Aorta (tissue), 5 donors: ENCODE measurements at regions of chr9 and their contacts with region 1.

Region 1: GRCh38 chr9:109705515-109705914 is 74.5 kb upstream of the PALM2AKAP2 start:
- DNase-seq: no peak
- ATAC-seq: no peak
- H3K4me3 ChIP-seq: no peak overlapping the region
- H3K27ac ChIP-seq: no peak overlapping the region
- H3K4me1 ChIP-seq: peaks cover 3 to 4% of the 10 kb centered on the region in 2 donors
- H3K27me3 ChIP-seq: no peaks in the 10 kb centered on the region

Region 2: DNA sequence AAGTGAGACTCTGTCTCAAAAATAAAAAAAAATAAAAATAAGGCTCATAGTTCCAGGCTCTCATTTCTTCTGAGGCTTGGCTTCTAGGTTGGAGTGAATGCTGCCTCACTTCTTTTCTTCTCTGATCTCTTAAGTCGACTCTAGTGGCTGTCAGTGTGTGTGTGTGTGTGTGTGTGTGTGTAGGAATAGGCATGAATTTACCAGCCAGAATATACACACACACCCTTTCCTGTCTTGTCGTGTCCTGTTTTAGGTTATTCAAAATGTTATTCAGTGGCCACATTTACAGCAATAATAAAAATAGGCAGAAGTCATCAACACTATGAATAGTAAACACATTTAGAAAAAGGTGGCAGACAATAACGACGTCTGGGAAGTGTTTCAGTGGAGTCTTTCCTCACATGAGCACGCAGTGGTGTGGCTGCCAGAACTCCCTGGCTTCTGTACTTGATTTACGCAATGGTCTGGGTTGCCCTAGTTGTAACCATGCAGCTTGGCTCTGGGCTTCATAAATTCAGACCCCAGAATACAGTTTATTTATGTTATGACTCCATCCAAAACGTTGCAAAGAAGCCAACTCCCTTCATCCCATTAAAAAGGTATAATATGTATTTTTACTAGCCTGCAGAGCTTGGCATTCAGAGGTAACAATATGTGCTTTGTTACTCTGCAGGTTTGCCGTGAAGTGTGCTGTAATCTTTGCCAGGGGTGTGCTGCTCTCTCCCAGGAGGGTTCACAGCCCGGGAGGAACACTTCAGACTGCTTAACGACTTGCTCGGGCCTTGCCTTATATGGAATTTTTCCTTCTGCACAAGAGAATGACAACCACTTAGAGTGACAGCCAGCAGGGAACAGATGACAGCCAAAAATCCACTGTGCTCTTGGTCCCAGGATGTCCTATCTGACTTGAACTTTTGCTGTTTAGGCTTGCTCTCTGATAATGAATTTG is 40.1 kb after region 1 on chr9:
- intact Hi-C with region 1: loop called in 1 of 2 experiments (anchors 5 kb)
- DNase-seq: peak; percentile 76 to 88
- ATAC-seq: peak; percentile 91
- H3K4me3 ChIP-seq: peak overlapping the region in 1 of 2 donors; percentile 10
- H3K27ac ChIP-seq: peak overlapping the region; percentile 43 to 60
- H3K4me1 ChIP-seq: peaks cover 12 to 15% of the 10 kb centered on the region in 2 donors
- H3K27me3 ChIP-seq: no peaks in the 10 kb centered on the region

Region 3: DNA sequence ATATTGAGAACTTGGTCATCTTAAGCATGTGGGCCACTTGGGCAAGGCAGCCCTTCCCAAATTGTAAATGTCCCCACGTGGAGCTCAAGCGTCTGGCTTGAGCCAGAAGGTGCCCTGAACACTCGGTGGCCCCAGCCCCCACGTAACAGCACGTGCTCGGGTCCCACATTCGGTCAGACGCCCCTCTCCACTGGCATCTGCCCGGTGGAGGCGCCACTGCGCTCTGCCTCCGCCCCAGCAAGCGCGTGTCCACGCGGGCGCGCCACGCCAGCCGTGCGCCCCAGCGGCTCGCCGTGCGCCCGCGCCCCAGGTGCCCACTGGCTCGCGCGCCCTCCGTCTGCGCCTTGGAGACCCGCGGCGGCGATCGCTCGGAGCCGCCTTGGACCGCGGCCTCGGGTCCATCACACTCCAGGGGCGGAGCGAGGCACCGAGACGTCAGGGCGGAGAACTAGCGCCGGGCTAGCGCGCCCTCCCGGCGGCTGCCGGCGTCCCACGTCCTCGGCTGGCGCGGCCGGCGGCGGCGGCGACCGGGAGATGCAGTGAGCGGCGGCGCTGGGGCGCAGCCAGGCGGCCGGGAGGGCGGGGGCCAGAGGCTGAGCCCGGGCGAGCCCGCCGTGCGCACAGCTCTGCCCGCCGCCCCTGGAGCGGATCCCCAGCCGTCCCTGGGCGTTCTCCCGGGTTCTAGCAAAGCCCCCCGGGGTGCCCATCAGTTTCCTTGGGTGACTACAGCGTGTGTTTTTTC is 74.4 kb after region 1 on chr9 and contains the start of gene PALM2AKAP2:
- intact Hi-C with region 1: loop called (anchors 5 kb)
- DNase-seq: peak; percentile 81 to 93
- ATAC-seq: peak; percentile 89
- H3K4me3 ChIP-seq: peak within 1 kb of the TSS; percentile 83 to 98
- H3K27ac ChIP-seq: peak within 1 kb of the TSS; percentile 32 to 81
- H3K4me1 ChIP-seq: peaks cover 0 to 15% of the 10 kb centered on the region in 2 donors
- H3K27me3 ChIP-seq: no peaks in the 10 kb centered on the region
- total RNA-seq, gene PALM2AKAP2: 58.1 to 155 TPM

Region 4: DNA sequence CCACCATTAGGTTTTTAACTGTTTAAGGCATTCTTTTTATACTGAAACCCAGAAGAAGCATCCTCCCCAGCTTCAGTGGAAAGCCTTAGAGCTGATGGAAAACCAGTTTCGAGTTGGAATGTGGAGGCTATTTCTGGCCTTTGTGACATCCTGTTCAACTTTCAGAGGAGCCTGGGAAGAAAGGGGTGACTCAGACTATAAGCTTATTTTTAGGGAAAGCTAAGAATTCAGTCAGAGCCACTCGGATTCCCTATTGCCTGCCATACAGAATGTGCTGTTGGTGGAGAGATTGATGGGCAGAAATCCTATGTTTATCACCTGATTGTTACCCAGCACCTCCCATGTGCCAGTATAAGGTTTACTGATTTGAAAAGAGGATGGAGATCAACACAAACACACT is 94.3 kb after region 1 on chr9:
- intact Hi-C with region 1: loop called in 1 of 2 experiments (anchors 5 kb)
- DNase-seq: no peak
- ATAC-seq: peak; percentile 64
- H3K4me3 ChIP-seq: no peak overlapping the region
- H3K27ac ChIP-seq: peak overlapping the region; percentile 92 to 98
- H3K4me1 ChIP-seq: peaks cover 12 to 14% of the 10 kb centered on the region in 2 donors
- H3K27me3 ChIP-seq: no peaks in the 10 kb centered on the region

Region 5: GRCh38 chr9:109817846-109818472 is 112.4 kb after region 1 on chr9:
- intact Hi-C with region 1: loop called (anchors 1 to 2 kb)
- DNase-seq: peak in 1 of 2 donors; percentile 55
- ATAC-seq: peak; percentile 88
- H3K4me3 ChIP-seq: no peak overlapping the region
- H3K27ac ChIP-seq: peak overlapping the region in 1 of 2 donors; percentile 89
- H3K4me1 ChIP-seq: peaks cover 0 to 7% of the 10 kb centered on the region in 2 donors
- H3K27me3 ChIP-seq: no peaks in the 10 kb centered on the region

Region 6: DNA sequence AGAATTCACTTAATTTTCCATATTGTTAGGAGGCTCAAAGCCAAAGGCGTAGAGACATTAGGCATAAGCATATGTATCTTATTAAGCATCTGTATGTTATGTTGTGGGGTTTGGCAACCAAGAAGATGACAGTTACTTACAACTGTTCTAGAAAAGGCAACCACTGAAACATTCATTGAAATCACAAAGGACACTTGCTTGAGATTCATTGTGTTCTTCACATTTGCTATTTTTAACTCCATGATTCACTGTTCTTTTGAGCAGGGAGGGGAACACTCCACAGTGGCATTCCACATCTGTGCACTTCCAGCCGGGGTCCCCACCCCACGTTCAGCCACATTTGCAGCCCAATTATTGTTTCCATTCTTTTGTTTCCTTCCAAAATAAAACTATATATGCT is 181.6 kb after region 1 on chr9:
- intact Hi-C with region 1: loop called in 1 of 2 experiments (anchors 5 kb)
- DNase-seq: no peak
- ATAC-seq: no peak
- H3K4me3 ChIP-seq: no peak overlapping the region
- H3K27ac ChIP-seq: no peak overlapping the region
- H3K4me1 ChIP-seq: peaks cover 0 to 9% of the 10 kb centered on the region in 2 donors
- H3K27me3 ChIP-seq: no peaks in the 10 kb centered on the region

Region 7: GRCh38 chr9:109986521-109986991 is 281.0 kb after region 1 on chr9:
- intact Hi-C with region 1: loop called in 1 of 2 experiments (anchors 5 kb)
- DNase-seq: no peak
- ATAC-seq: peak; percentile 70
- H3K4me3 ChIP-seq: no peak overlapping the region
- H3K27ac ChIP-seq: no peak overlapping the region
- H3K4me1 ChIP-seq: peaks cover under 1 to 3% of the 10 kb centered on the region in 2 donors
- H3K27me3 ChIP-seq: no peaks in the 10 kb centered on the region